Dendritic cell treated with granulocyte-macrophage colony-stimulating factor and Interleukin-4, amounts not matched to agents 40 ng/mL and 50 ng/mL, for 4 days (primary cell): ENCODE measurements at regions of chr9 and their contacts with region 1.

Region 1: DNA sequence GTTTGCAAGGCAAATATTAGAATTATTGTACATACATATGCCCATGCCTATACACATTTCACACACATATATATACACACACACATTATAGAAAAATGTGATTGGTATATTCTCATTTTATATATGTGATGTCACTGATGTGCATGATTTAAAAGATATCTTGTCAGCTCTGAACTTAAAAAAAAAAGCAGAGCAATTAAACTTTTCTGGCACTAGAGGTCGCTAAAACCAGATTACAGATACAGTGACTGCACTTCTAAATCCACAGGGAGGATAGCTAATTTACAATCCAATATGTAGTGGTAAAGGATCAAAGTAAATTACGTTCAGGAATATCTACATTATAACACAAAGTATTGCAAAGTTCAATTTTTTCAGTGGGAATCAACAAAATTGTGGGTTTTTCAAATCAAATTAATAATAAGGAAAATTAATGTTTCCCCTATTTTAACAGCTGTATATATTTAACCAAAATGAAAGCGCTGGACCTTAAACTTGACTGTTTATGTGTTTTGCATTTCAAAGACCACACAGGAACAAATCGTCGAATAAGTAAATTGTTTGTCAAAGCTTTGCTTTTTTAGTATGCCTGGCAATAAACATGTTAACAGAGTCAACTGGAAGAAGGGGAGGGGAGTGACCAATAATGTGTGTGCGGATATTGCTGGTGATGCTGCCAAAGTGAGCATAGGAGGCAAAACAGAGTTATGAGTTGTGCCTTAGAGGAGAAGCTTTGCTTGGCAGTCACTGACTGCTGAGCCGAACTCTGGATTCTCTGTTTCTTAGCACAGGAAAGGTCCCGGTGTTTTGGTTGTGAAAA is 1201.3 kb upstream of the C9orf72 start:
- H3K4me3 Mint-ChIP-seq: no peak overlapping the region
- H3K27ac Mint-ChIP-seq: no peak overlapping the region
- H3K4me1 Mint-ChIP-seq: no peaks in the 10 kb centered on the region
- H3K27me3 Mint-ChIP-seq: no peaks in the 10 kb centered on the region

Region 2: DNA sequence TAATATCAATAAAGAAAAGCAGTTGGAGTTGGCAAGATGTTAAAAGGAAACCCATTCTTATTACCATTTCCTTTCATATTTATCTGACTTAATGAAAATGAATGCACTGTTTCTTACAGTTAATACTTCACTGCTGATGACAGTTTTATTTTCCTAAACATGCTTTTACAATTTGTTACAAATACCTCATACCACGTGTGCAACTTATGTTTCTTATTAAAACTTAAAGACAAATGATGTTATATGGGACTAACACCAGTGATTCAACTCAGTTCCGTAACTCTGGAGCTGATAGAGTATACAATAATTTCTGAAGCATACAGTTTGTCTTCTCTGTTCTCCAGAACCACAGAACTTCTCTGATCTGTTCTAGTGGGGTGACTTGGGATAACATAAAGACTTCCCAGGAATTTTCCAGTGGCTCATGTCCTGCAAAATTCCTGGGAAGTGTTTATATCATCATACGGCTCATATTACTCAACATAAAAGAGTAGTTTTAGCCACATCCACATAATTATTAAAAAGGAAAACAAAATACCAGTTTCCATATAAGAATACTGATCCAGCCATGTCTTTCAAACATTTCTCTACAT is 57.6 kb after region 1 on chr9:
- intact Hi-C with region 1: no loop called
- H3K4me3 Mint-ChIP-seq: no peak overlapping the region
- H3K27ac Mint-ChIP-seq: no peak overlapping the region
- H3K4me1 Mint-ChIP-seq: no peaks in the 10 kb centered on the region
- H3K27me3 Mint-ChIP-seq: no peaks in the 10 kb centered on the region

Region 3: GRCh38 chr9:29691758-29692407 is 917.3 kb after region 1 on chr9:
- intact Hi-C with region 1: loop called (anchors 10 kb)
- H3K4me3 Mint-ChIP-seq: no peak overlapping the region
- H3K27ac Mint-ChIP-seq: no peak overlapping the region
- H3K4me1 Mint-ChIP-seq: no peaks in the 10 kb centered on the region
- H3K27me3 Mint-ChIP-seq: no peaks in the 10 kb centered on the region